B cell (primary cell): ENCODE measurements at regions of chr1 and their contacts with region 1.

Region 1: DNA sequence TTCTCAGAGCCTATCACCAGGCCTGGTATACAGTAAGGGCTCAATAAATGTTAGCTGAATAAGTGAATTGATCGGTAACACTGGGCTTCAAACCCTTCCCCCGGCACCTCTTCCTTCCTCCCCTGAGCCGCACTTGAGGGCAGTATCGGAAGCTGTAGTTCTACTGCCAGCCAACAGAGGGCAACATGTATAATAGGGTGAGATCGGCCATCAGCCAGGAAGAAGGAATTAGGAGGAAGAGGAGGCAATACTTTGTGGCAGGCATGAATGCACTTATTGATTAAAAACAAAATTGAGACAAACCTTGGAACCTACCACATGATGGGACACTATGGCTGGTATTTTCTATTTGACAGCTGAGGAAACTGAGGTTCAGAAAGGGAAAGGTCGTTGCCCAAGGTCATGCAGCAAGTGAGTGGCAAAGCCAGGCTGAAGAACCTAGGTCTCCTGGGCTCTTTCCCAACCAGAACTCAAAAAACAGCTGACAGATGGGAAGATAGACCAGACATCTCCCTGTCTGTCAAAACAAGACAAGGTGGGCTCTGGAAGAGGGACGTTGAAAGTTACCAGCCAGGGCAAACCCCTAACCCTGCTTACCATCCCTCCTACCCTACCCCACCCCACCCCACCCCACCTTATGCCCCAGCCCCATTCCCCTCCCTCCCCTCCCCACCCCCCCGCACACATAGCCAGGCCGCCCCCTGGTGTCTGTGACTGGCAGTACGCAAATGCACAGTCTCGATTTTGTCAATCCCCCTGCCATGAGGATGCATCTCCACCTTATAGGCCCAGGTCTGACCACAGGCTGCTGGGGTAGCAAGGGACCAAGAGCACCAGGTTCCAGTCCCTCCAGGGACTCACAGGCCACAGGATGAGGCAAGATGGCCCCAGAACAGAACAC is 107.3 kb upstream of the RUNX3 start:
- DNase-seq: peak; percentile 74
- ATAC-seq: peak; percentile 65
- H3K4me3 ChIP-seq: no peak overlapping the region
- H3K4me3 Mint-ChIP-seq: peak overlapping the region; percentile 0
- H3K27ac ChIP-seq: no peak overlapping the region
- H3K27ac Mint-ChIP-seq: peak overlapping the region; percentile 63
- H3K4me1 ChIP-seq: peaks cover 36 to 49% of the 10 kb centered on the region in 2 donors
- H3K4me1 Mint-ChIP-seq: peaks cover 34% of the 10 kb centered on the region
- H3K27me3 ChIP-seq: peaks cover 0 to under 1% (median 0%) of the 10 kb centered on the region in 4 experiments
- H3K27me3 Mint-ChIP-seq: peaks cover 5% of the 10 kb centered on the region
- CTCF ChIP-seq: peak; percentile 71

Region 2: GRCh38 chr1:24946861-24947658 is 90.4 kb before region 1 on chr1:
- CTCF ChIA-PET with region 1: interaction called, 81 read pairs
- POLR2A ChIA-PET with region 1: no interaction called
- intact Hi-C with region 1: no loop called
- DNase-seq: peak; percentile 23
- ATAC-seq: no peak
- H3K4me3 ChIP-seq: no peak overlapping the region
- H3K4me3 Mint-ChIP-seq: no peak overlapping the region
- H3K27ac ChIP-seq: no peak overlapping the region
- H3K27ac Mint-ChIP-seq: peak overlapping the region; percentile 32
- H3K4me1 ChIP-seq: peaks cover 13 to 34% of the 10 kb centered on the region in 2 donors
- H3K4me1 Mint-ChIP-seq: peaks cover 36% of the 10 kb centered on the region
- H3K27me3 ChIP-seq: no peaks in the 10 kb centered on the region
- H3K27me3 Mint-ChIP-seq: no peaks in the 10 kb centered on the region
- CTCF ChIP-seq: no peak

Region 3: GRCh38 chr1:24964811-24965570 is 72.4 kb before region 1 on chr1:
- CTCF ChIA-PET with region 1: interaction called, 131 read pairs
- POLR2A ChIA-PET with region 1: interaction called, 5 read pairs
- intact Hi-C with region 1: loop called (anchors 1 kb)
- DNase-seq: peak; percentile 93
- ATAC-seq: peak; percentile 88
- H3K4me3 ChIP-seq: peak overlapping the region in 4 of 5 experiments; percentile 10 to 40 (median 24)
- H3K4me3 Mint-ChIP-seq: peak overlapping the region; percentile 79
- H3K27ac ChIP-seq: peak overlapping the region; percentile 75 to 77
- H3K27ac Mint-ChIP-seq: peak overlapping the region; percentile 89
- H3K4me1 ChIP-seq: peaks cover 21 to 44% of the 10 kb centered on the region in 2 donors
- H3K4me1 Mint-ChIP-seq: peaks cover 50% of the 10 kb centered on the region
- H3K27me3 ChIP-seq: no peaks in the 10 kb centered on the region
- H3K27me3 Mint-ChIP-seq: no peaks in the 10 kb centered on the region
- CTCF ChIP-seq: no peak